ENCODE measurements at regions of chr10 and their contacts with region 1.

Region 1: DNA sequence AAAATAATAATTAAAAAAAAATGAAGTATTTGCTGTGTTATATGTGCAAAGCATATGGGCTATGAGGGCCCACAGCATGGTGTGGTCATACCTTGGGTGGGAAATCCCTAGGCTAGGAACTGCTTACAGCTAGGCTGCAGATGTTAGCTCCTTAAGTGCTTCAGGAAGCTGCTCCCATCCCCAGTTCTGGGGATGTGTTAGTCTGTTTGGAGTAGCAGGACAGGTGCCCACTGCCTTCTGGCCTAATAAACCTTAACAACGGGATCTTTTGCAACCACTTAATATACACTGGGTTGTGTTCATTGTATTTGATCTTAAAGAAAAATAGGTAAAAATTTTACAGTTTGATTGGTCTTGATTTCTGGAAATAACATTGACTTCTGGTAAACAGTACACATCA is 46.3 kb downstream of the HK1 start:
- DNase-seq: no peak
- H3K27ac ChIP-seq: peak overlapping the region; percentile 72
- CTCF ChIP-seq: no peak

Region 2: DNA sequence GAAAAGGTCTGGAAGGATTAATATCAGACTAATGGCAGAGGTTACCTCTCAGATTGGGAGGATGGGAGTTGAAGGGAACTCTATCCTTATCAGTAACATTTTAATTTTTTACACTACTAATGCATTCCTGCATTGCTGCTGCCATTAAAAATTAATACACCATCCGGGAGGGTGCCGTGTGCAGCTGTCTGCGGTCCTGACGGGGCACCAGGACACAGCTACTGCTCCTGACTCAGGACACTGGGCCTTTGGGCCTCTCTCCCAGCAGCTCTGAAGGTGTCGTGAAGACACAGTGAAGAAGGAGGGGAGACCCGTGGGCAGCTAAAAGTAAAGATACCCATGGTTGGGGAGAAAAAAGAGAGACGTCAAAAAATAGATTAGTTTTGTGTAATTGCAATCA is 69.7 kb before region 1 on chr10:
- CTCF ChIA-PET with region 1: no interaction called
- POLR2A ChIA-PET with region 1: interaction called, 12 read pairs
- DNase-seq: no peak
- H3K27ac ChIP-seq: no peak overlapping the region
- CTCF ChIP-seq: no peak